CD14-positive monocyte (primary cell): ENCODE measurements at regions of chr4 and their contacts with region 1.

Region 1: DNA sequence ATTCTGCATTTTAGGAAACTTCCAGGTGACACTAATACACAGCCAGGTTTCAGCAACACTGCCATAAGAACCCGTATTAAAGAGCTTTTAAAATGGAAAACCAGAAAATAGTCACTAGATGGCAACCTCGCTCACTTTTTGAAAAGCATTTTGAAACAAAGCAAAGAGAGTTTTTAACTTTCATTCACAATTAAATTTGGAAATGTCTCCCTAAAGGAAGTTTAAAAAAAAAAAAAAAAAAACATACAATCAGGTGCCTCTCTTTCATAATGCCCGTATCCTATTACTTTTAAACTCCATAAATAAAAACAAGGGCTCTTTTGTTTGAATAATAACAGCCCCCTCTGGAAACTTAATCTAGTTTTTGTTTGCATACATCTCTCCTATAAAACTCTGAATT is 20.3 kb downstream of the MEPE start:
- DNase-seq: peak; percentile 31 to 54 (median 51)
- H3K4me3 ChIP-seq: no peak overlapping the region
- H3K4me3 Mint-ChIP-seq: no peak overlapping the region
- H3K27ac ChIP-seq: no peak overlapping the region
- H3K27ac Mint-ChIP-seq: peak overlapping the region in 2 of 7 donors; percentile 17 to 46
- H3K4me1 ChIP-seq: peaks cover 40 to 42% of the 10 kb centered on the region in 2 donors
- H3K4me1 Mint-ChIP-seq: peaks cover 36% of the 10 kb centered on the region
- H3K27me3 ChIP-seq: peaks cover 0 to 2% of the 10 kb centered on the region in 2 donors
- H3K27me3 Mint-ChIP-seq: peaks cover 2 to 5% (median 3%) of the 10 kb centered on the region in 3 donors
- CTCF ChIP-seq: peak; percentile 65

Region 2: GRCh38 chr4:86977621-86978184 is 875.4 kb before region 1 on chr4:
- intact Hi-C with region 1: no loop called
- DNase-seq: no peak
- H3K4me3 ChIP-seq: no peak overlapping the region
- H3K4me3 Mint-ChIP-seq: no peak overlapping the region
- H3K27ac ChIP-seq: no peak overlapping the region
- H3K27ac Mint-ChIP-seq: peak overlapping the region in 3 of 7 donors; percentile 10 to 74 (median 54)
- H3K4me1 ChIP-seq: peaks cover 39 to 47% of the 10 kb centered on the region in 2 donors
- H3K4me1 Mint-ChIP-seq: peaks cover 57% of the 10 kb centered on the region
- H3K27me3 ChIP-seq: no peaks in the 10 kb centered on the region
- H3K27me3 Mint-ChIP-seq: no peaks in the 10 kb centered on the region
- CTCF ChIP-seq: no peak

Region 3: DNA sequence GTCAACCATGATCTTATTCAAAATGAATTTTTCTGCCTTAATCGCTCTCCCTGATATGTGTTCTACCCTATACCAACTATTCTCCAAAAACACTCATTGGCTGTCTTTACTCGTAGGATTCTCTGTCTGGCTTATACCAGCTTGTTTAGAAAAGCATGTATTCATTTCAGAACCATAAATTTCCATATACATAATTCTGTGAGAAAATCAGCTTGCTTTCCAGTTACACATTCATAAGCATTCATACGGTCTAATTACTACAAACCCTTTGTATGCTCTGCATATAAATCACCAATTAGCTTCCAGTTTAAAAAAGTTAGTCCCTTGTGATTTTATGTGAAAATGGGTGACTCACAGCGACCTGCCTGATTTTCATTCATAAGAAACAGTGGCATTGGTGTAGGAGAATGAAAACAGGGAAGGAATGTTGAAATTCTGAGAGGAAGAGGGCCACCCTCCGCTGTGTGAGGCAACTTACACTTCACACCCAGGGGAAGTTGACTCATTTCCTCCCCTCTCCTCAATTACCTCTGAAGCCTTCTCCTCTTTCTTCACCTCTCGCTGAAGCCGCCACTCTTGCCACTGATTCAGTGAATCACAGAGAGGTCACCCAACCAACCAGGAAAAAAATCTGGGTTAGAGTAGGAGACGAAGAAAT is 43.0 kb after region 1 on chr4:
- intact Hi-C with region 1: loop called (anchors 5 to 10 kb)
- DNase-seq: peak; percentile 92 to 98 (median 97)
- H3K4me3 ChIP-seq: peak overlapping the region in 1 of 3 experiments; percentile 49
- H3K4me3 Mint-ChIP-seq: peak overlapping the region in 1 of 2 donors; percentile 33
- H3K27ac ChIP-seq: peak overlapping the region in 1 of 2 donors; percentile 52
- H3K27ac Mint-ChIP-seq: peak overlapping the region; percentile 76 to 93 (median 91)
- H3K4me1 ChIP-seq: peaks cover 27 to 32% of the 10 kb centered on the region in 2 donors
- H3K4me1 Mint-ChIP-seq: peaks cover 39% of the 10 kb centered on the region
- H3K27me3 ChIP-seq: peaks cover 0 to 2% of the 10 kb centered on the region in 2 donors
- H3K27me3 Mint-ChIP-seq: peaks cover 2 to 13% (median 3%) of the 10 kb centered on the region in 3 donors
- CTCF ChIP-seq: no peak

Region 4: GRCh38 chr4:87901422-87901992 is 48.4 kb after region 1 on chr4:
- intact Hi-C with region 1: loop called (anchors 5 to 10 kb)
- DNase-seq: no peak
- H3K4me3 ChIP-seq: no peak overlapping the region
- H3K4me3 Mint-ChIP-seq: no peak overlapping the region
- H3K27ac ChIP-seq: no peak overlapping the region
- H3K27ac Mint-ChIP-seq: no peak overlapping the region
- H3K4me1 ChIP-seq: peaks cover 9 to 18% of the 10 kb centered on the region in 2 donors
- H3K4me1 Mint-ChIP-seq: peaks cover 25% of the 10 kb centered on the region
- H3K27me3 ChIP-seq: peaks cover 0 to 2% of the 10 kb centered on the region in 2 donors
- H3K27me3 Mint-ChIP-seq: peaks cover 2 to 6% (median 4%) of the 10 kb centered on the region in 3 donors
- CTCF ChIP-seq: no peak

Region 5: GRCh38 chr4:87916626-87917025 is 63.5 kb after region 1 on chr4:
- intact Hi-C with region 1: no loop called
- DNase-seq: peak in 1 of 3 donors; percentile 9
- H3K4me3 ChIP-seq: no peak overlapping the region
- H3K4me3 Mint-ChIP-seq: no peak overlapping the region
- H3K27ac ChIP-seq: no peak overlapping the region
- H3K27ac Mint-ChIP-seq: no peak overlapping the region
- H3K4me1 ChIP-seq: peaks cover 8 to 9% of the 10 kb centered on the region in 2 donors
- H3K4me1 Mint-ChIP-seq: peaks cover 12% of the 10 kb centered on the region
- H3K27me3 ChIP-seq: no peaks in the 10 kb centered on the region
- H3K27me3 Mint-ChIP-seq: peaks cover 0 to 2% (median 2%) of the 10 kb centered on the region in 3 donors
- CTCF ChIP-seq: no peak

Region 6: DNA sequence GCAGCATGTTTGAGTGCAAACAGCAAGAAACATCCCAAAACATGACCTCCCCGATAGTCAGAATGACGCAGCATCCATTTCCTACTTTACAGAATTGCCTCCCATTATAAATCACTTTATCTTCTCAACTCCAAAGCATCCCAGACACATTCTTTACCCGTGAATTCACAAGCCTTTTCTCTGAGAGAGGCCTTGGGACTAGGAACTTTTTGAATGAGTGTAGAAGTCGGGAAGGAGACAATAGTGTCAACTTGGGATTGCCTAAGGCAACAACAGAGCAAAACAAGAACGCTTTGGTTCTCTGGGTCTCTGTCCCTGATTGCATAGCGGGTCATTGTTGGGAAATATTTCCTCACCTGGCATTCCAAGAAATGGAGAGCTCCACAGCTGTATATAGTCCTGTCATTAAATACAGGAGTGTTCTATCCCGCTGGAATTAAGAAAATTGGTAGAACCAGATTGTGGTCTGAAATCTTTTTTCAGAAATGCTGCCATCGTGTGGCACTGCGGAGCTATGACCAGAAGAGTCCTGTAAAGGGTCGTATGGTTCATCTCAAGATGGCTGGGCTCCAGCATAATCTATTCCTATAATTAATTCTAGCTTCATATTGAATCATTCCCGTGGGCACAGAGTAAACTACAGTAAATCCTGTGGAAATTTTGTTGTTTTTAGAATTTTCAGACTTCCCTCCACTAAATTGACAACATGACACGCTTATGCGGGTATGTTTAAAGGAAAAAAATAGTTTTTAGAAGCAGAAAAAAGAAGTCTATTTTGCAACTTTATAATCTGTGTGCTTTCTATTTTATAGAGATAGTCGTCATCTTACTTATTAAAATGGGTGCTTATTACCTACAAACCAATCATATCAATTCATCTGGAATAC is 120.4 kb after region 1 on chr4:
- intact Hi-C with region 1: loop called (anchors 2 to 5 kb)
- DNase-seq: peak; percentile 30 to 63 (median 56)
- H3K4me3 ChIP-seq: peak overlapping the region in 2 of 3 experiments; percentile 5 to 33
- H3K4me3 Mint-ChIP-seq: peak overlapping the region in 1 of 2 donors; percentile 72
- H3K27ac ChIP-seq: no peak overlapping the region
- H3K27ac Mint-ChIP-seq: no peak overlapping the region
- H3K4me1 ChIP-seq: peaks cover 11 to 14% of the 10 kb centered on the region in 2 donors
- H3K4me1 Mint-ChIP-seq: peaks cover 13% of the 10 kb centered on the region
- H3K27me3 ChIP-seq: peaks cover 12 to 15% of the 10 kb centered on the region in 2 donors
- H3K27me3 Mint-ChIP-seq: peaks cover 6 to 15% (median 15%) of the 10 kb centered on the region in 3 donors
- CTCF ChIP-seq: peak; percentile 87